A549 (cell line): ENCODE measurements at regions of chr2 and their contacts with region 1.

Region 1: GRCh38 chr2:111120253-111121027 is at the start of gene BCL2L11:
- DNase-seq: peak; percentile 70 to 94
- ATAC-seq: peak; percentile 54 to 65
- H3K4me3 ChIP-seq: peak within 1 kb of the TSS; percentile 78
- H3K27ac ChIP-seq: peak within 1 kb of the TSS; percentile 91 to 94
- H3K4me1 ChIP-seq: peaks cover 21% of the 10 kb centered on the region
- CTCF ChIP-seq: peak; percentile 42
- EP300 ChIP-seq: no peak
- POLR2A ChIP-seq: peak; percentile 90
- RAD21 ChIP-seq: peak in 1 of 2 experiments; percentile 50; a peak in 1 of 5 replicates
- polyA plus RNA-seq, gene BCL2L11: 7.4 and 14.5 TPM in 2 replicates

Region 2: GRCh38 chr2:110886826-110887573 is 233.4 kb before region 1 on chr2:
- CTCF ChIA-PET with region 1: no interaction called
- POLR2A ChIA-PET with region 1: no interaction called
- DNase-seq: no peak
- ATAC-seq: no peak
- H3K4me3 ChIP-seq: no peak overlapping the region
- H3K27ac ChIP-seq: no peak overlapping the region
- H3K4me1 ChIP-seq: no peaks in the 10 kb centered on the region
- CTCF ChIP-seq: no peak
- EP300 ChIP-seq: no peak
- POLR2A ChIP-seq: no peak
- RAD21 ChIP-seq: no peak

Region 3: GRCh38 chr2:111100765-111101162 is 19.7 kb before region 1 on chr2:
- CTCF ChIA-PET with region 1: interaction called, 15 read pairs
- POLR2A ChIA-PET with region 1: no interaction called
- DNase-seq: peak in 1 of 2 experiments; percentile 24
- ATAC-seq: peak in 1 of 2 experiments; percentile 39; a peak in 1 of 6 replicates
- H3K4me3 ChIP-seq: no peak overlapping the region
- H3K27ac ChIP-seq: no peak overlapping the region
- H3K4me1 ChIP-seq: no peaks in the 10 kb centered on the region
- CTCF ChIP-seq: no peak
- EP300 ChIP-seq: no peak
- POLR2A ChIP-seq: no peak
- RAD21 ChIP-seq: no peak

Region 4: DNA sequence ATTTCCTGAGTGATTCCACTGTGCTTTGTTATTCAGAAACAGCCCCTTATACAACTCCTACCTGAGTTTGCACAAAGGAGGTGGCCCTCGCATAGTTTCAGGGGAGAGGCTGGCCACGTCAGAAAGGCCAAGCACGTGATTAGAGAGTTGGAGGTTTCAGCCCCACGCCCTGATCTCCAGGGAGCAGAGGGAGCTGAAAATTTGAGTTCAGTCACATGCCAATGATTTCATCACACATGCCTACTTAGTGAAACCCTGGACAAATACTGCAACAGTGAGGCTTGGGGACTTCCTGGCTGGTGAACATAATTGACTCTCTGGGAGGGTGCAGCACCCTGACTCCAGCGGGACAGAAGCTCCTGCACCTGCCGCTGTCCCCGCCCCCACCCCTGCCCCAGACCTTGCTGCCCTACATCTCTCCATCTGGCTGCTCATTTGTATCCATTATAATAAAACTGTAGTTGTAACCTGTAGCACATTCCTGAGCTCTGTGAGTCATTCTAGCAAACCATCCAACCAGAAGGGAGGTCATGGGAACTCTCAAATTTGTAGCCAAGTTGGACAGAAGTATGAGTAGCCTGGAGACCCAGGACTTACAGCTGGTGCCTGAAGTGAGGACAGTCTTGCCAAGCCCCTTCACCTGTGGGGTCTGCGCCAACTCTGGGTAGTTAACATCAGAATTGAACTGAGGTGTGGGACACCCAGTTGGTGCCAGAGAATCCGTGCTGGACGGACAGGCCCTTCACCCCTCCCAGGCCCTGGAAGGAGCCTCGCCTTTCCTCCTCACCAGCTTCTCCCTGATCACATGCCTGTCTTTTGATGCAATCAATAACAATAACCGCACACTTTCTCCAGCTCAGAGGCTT is 539.2 kb after region 1 on chr2:
- CTCF ChIA-PET with region 1: interaction called, 3 read pairs
- POLR2A ChIA-PET with region 1: interaction called, 10 read pairs
- DNase-seq: peak; percentile 60 to 79
- ATAC-seq: peak; percentile 81 to 94
- H3K4me3 ChIP-seq: no peak overlapping the region
- H3K27ac ChIP-seq: peak overlapping the region; percentile 79 to 90
- H3K4me1 ChIP-seq: peaks cover 34% of the 10 kb centered on the region
- CTCF ChIP-seq: no peak
- EP300 ChIP-seq: peak in 1 of 2 experiments; percentile 61; a peak in 1 of 5 replicates
- POLR2A ChIP-seq: no peak
- RAD21 ChIP-seq: no peak; a peak in 1 of 5 replicates

Region 5: DNA sequence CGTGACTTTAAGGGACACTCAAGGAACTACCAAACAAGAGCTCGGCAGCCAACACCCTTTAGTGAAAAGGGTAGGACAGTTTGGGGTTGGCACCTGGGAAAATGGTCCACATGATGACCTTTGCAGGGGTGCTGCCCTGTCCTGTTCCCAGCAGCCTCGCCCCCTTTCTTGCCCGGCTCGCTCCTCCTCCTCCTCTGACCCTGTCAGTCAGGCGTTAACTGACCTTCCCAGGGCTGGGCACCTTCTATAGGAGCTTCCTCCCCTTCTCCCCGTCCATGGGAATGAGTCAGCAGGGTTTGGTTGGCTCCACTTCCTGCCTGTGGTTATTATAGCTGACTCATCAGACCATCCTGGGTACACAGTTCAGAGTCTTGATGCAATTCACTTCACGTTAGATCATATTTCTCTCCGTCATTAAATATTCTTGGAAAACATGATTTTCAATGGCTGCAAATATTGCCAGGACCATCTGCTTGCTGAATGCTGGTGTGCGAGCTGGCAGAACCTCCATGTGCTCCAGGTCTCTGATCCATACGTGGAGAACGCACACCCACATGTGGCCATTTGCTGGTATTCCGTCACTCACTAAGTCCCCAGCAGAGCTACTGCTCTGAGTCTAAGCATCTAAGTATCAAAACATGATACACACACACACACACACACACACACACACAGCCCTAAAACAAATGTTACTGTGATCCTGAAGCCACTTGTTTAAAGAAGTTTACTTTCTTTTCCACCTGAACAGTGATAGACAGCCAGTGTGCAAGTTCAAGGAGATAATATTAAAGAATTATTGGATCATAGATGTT is 578.5 kb after region 1 on chr2:
- CTCF ChIA-PET with region 1: interaction called, 23 read pairs
- POLR2A ChIA-PET with region 1: interaction called, 23 read pairs
- DNase-seq: peak; percentile 95 to 97
- ATAC-seq: peak; percentile 97 to 98
- H3K4me3 ChIP-seq: peak overlapping the region; percentile 17; the same call in 1 of the 3 replicates
- H3K27ac ChIP-seq: peak overlapping the region; percentile 88 to 91
- H3K4me1 ChIP-seq: peaks cover 37% of the 10 kb centered on the region
- CTCF ChIP-seq: peak; percentile 76
- EP300 ChIP-seq: peak; percentile 73 to 82; a peak in 3 of 5 replicates
- POLR2A ChIP-seq: no peak
- RAD21 ChIP-seq: peak; percentile 92 to 95